CD8-positive, alpha-beta T cell (primary cell): ENCODE measurements at regions of chr17 and their contacts with region 1.

Region 1: GRCh38 chr17:40086150-40087044 is 14.0 kb downstream of the NR1D1 start:
- DNase-seq: peak in 8 of 9 experiments; percentile 50 to 77 (median 70)
- ATAC-seq: peak; percentile 70
- H3K4me3 ChIP-seq: no peak overlapping the region
- H3K4me3 Mint-ChIP-seq: no peak overlapping the region
- H3K27ac ChIP-seq: no peak overlapping the region
- H3K27ac Mint-ChIP-seq: no peak overlapping the region
- H3K4me1 ChIP-seq: peaks cover 9% of the 10 kb centered on the region
- H3K4me1 Mint-ChIP-seq: peaks cover 9% of the 10 kb centered on the region
- H3K27me3 ChIP-seq: no peaks in the 10 kb centered on the region
- H3K27me3 Mint-ChIP-seq: no peaks in the 10 kb centered on the region
- CTCF ChIP-seq: peak; percentile 80

Region 2: GRCh38 chr17:40026816-40027613 is 59.4 kb before region 1 on chr17:
- CTCF ChIA-PET with region 1: interaction called, 13 read pairs
- POLR2A ChIA-PET with region 1: no interaction called
- intact Hi-C with region 1: no loop called
- DNase-seq: peak; percentile 45 to 87 (median 78)
- ATAC-seq: peak; percentile 88
- H3K4me3 ChIP-seq: no peak overlapping the region
- H3K4me3 Mint-ChIP-seq: no peak overlapping the region
- H3K27ac ChIP-seq: no peak overlapping the region
- H3K27ac Mint-ChIP-seq: no peak overlapping the region
- H3K4me1 ChIP-seq: peaks cover 21% of the 10 kb centered on the region
- H3K4me1 Mint-ChIP-seq: peaks cover 22% of the 10 kb centered on the region
- H3K27me3 ChIP-seq: no peaks in the 10 kb centered on the region
- H3K27me3 Mint-ChIP-seq: no peaks in the 10 kb centered on the region
- CTCF ChIP-seq: peak; percentile 79

Region 3: GRCh38 chr17:40038882-40039513 is 47.4 kb before region 1 on chr17:
- CTCF ChIA-PET with region 1: interaction called, 24 read pairs
- POLR2A ChIA-PET with region 1: no interaction called
- intact Hi-C with region 1: loop called in 1 of 2 experiments (anchors 1 kb)
- DNase-seq: peak in 2 of 9 experiments; percentile 31 to 44
- ATAC-seq: no peak
- H3K4me3 ChIP-seq: no peak overlapping the region
- H3K4me3 Mint-ChIP-seq: no peak overlapping the region
- H3K27ac ChIP-seq: no peak overlapping the region
- H3K27ac Mint-ChIP-seq: no peak overlapping the region
- H3K4me1 ChIP-seq: no peaks in the 10 kb centered on the region
- H3K4me1 Mint-ChIP-seq: peaks cover 3% of the 10 kb centered on the region
- H3K27me3 ChIP-seq: no peaks in the 10 kb centered on the region
- H3K27me3 Mint-ChIP-seq: no peaks in the 10 kb centered on the region
- CTCF ChIP-seq: peak; percentile 30

Region 4: GRCh38 chr17:40062329-40063186 is 23.8 kb before region 1 on chr17 and contains the start of gene THRA:
- CTCF ChIA-PET with region 1: interaction called, 402 read pairs
- POLR2A ChIA-PET with region 1: interaction called, 3 read pairs
- intact Hi-C with region 1: loop called (anchors 1 kb)
- DNase-seq: peak; percentile 47 to 88 (median 71)
- ATAC-seq: peak; percentile 90
- H3K4me3 ChIP-seq: peak within 1 kb of the TSS; percentile 84 to 97
- H3K4me3 Mint-ChIP-seq: peak within 1 kb of the TSS; percentile 91
- H3K27ac ChIP-seq: peak within 1 kb of the TSS; percentile 49 to 64
- H3K27ac Mint-ChIP-seq: peak within 1 kb of the TSS; percentile 85
- H3K4me1 ChIP-seq: peaks cover 48% of the 10 kb centered on the region
- H3K4me1 Mint-ChIP-seq: peaks cover 45% of the 10 kb centered on the region
- H3K27me3 ChIP-seq: no peaks in the 10 kb centered on the region
- H3K27me3 Mint-ChIP-seq: no peaks in the 10 kb centered on the region
- CTCF ChIP-seq: no peak
- total RNA-seq, gene THRA: 34.6 to 35.7 TPM

Region 5: GRCh38 chr17:40098846-40099618 is 12.6 kb after region 1 on chr17:
- CTCF ChIA-PET with region 1: interaction called, 18 read pairs
- POLR2A ChIA-PET with region 1: interaction called, 5 read pairs
- intact Hi-C with region 1: no loop called
- DNase-seq: peak; percentile 97 to 100 (median 99)
- ATAC-seq: peak; percentile 64
- H3K4me3 ChIP-seq: peak overlapping the region; percentile 75 to 90
- H3K4me3 Mint-ChIP-seq: peak overlapping the region; percentile 94
- H3K27ac ChIP-seq: peak overlapping the region; percentile 79 to 98
- H3K27ac Mint-ChIP-seq: peak overlapping the region; percentile 95
- H3K4me1 ChIP-seq: peaks cover 80% of the 10 kb centered on the region
- H3K4me1 Mint-ChIP-seq: peaks cover 88% of the 10 kb centered on the region
- H3K27me3 ChIP-seq: no peaks in the 10 kb centered on the region
- H3K27me3 Mint-ChIP-seq: no peaks in the 10 kb centered on the region
- CTCF ChIP-seq: no peak

Region 6: GRCh38 chr17:40107522-40108174 is 21.3 kb after region 1 on chr17:
- CTCF ChIA-PET with region 1: interaction called, 237 read pairs
- POLR2A ChIA-PET with region 1: interaction called, 141 read pairs
- intact Hi-C with region 1: no loop called
- DNase-seq: peak in 4 of 9 experiments; percentile 32 to 71 (median 42)
- ATAC-seq: peak; percentile 5
- H3K4me3 ChIP-seq: peak overlapping the region in 1 of 2 experiments; percentile 17
- H3K4me3 Mint-ChIP-seq: peak overlapping the region; percentile 56
- H3K27ac ChIP-seq: peak overlapping the region; percentile 80 to 95
- H3K27ac Mint-ChIP-seq: peak overlapping the region; percentile 99
- H3K4me1 ChIP-seq: peaks cover 99% of the 10 kb centered on the region
- H3K4me1 Mint-ChIP-seq: peaks cover 98% of the 10 kb centered on the region
- H3K27me3 ChIP-seq: no peaks in the 10 kb centered on the region
- H3K27me3 Mint-ChIP-seq: no peaks in the 10 kb centered on the region
- CTCF ChIP-seq: no peak